Posterior vena cava (tissue), 2 donors: ENCODE measurements at regions of chr5 and their contacts with region 1.

Region 1: GRCh38 chr5:43066799-43067741 is 27.0 kb upstream of the ANXA2R start:
- DNase-seq: peak; percentile 95

Region 2: GRCh38 chr5:43019614-43020293 is 47.3 kb before region 1 on chr5:
- intact Hi-C with region 1: loop called in 1 of 2 experiments (anchors 1 kb)
- DNase-seq: peak; percentile 84